Lower leg skin (tissue), 4 donors: ENCODE measurements at regions of chr16 and their contacts with region 1.

Region 1: DNA sequence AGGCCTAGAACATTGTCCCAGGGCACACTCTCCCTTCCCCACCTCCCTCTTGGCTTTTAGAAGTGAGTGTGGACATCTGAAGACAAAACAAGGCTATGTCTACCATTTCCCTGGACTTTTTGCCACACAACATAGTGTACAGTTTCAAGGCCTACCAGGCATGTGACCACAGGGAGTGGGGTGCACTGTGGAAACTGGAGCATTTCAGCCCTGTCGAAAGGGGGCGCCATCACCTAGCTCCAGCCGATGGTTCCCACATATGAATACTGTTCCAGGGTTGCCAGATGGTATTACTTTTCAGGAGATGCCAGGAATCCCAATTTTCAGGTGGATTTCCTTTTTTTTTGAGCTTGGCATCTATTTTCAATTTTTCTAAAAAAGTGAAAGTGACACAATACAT is 140.7 kb downstream of the KATNIP start:
- DNase-seq: peak in 1 of 2 donors; percentile 81
- H3K4me3 ChIP-seq: no peak overlapping the region
- CTCF ChIP-seq: no peak
- POLR2A ChIP-seq: no peak

Region 2: DNA sequence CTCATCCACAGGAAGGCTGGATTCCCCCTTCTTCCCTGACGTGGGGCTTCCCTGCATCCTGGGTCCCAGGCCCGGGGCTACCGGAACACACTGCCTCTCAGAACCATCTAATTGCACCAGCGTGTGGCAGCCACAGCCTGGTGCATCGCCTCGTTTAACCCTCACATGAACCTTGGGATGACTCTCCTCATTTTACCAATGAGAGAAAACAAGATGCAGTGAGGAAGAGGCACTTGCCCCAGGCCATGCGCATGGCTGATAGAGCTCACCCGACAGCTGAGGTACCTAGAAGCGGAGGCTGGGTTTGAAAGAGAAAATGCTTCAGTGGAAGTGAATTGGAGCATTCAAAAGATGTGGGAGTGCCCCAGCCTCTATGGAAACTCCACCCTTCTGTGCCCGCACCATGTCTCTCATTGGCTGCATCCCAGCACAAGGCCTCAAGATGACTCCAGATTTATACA is 21.7 kb after region 1 on chr16:
- intact Hi-C with region 1: no loop called
- DNase-seq: no peak
- H3K4me3 ChIP-seq: no peak overlapping the region
- CTCF ChIP-seq: no peak
- POLR2A ChIP-seq: no peak

Region 3: GRCh38 chr16:28063641-28064061 is 373.0 kb after region 1 on chr16 and contains the start of gene GSG1L:
- intact Hi-C with region 1: loop called (anchors 10 kb)
- DNase-seq: no peak
- H3K4me3 ChIP-seq: no peak within 1 kb of the TSS
- CTCF ChIP-seq: no peak
- POLR2A ChIP-seq: no peak
- total RNA-seq, gene GSG1L: 0.49 to 1.1 (median 0.59) TPM in 3 of 4 donors, not detected in the other